IMR-90 (cell line): ENCODE measurements at regions of chr4 and their contacts with region 1.

Region 1: GRCh38 chr4:33649015-33649414 is 2595.3 kb downstream of the ARAP2 start:
- DNase-seq: peak; percentile 5
- ATAC-seq: no peak
- H3K4me3 ChIP-seq: no peak overlapping the region
- H3K27ac ChIP-seq: no peak overlapping the region
- H3K4me1 ChIP-seq: no peaks in the 10 kb centered on the region
- H3K27me3 ChIP-seq: no peaks in the 10 kb centered on the region
- CTCF ChIP-seq: peak; percentile 37
- POLR2A ChIP-seq: no peak
- RAD21 ChIP-seq: peak; percentile 52

Region 2: DNA sequence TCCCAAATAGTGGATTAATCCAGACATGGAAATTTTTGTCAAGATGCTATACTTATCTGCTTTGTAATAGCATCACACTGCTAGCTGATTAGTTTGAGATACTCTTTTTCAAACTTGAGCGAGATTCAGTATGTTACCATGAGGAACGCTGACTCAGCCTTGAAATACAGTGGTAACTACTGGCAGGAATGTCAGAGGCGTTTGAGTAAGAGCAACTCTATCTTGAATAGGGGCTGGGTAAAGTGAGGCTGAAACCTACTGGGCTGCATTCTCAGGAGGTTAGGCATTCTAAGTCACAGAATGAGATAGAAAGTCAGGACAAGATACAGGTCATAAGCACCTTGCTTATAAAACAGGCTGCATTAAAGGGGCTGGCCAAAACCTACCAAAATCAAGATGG is 75.7 kb after region 1 on chr4:
- CTCF ChIA-PET with region 1: no interaction called
- POLR2A ChIA-PET with region 1: no interaction called
- dilution Hi-C with region 1: no loop called
- in situ Hi-C with region 1: no loop called
- intact Hi-C with region 1: no loop called
- DNase-seq: no peak
- ATAC-seq: no peak
- H3K4me3 ChIP-seq: no peak overlapping the region
- H3K27ac ChIP-seq: no peak overlapping the region
- H3K4me1 ChIP-seq: no peaks in the 10 kb centered on the region
- H3K27me3 ChIP-seq: no peaks in the 10 kb centered on the region
- CTCF ChIP-seq: no peak
- POLR2A ChIP-seq: no peak
- RAD21 ChIP-seq: no peak

Region 3: GRCh38 chr4:34720571-34720970 is 1071.6 kb after region 1 on chr4:
- CTCF ChIA-PET with region 1: no interaction called
- POLR2A ChIA-PET with region 1: no interaction called
- dilution Hi-C with region 1: no loop called
- in situ Hi-C with region 1: no loop called
- intact Hi-C with region 1: loop called (anchors 5 kb)
- DNase-seq: peak; percentile 24
- ATAC-seq: no peak
- H3K4me3 ChIP-seq: no peak overlapping the region
- H3K27ac ChIP-seq: no peak overlapping the region
- H3K4me1 ChIP-seq: no peaks in the 10 kb centered on the region
- H3K27me3 ChIP-seq: no peaks in the 10 kb centered on the region
- CTCF ChIP-seq: peak; percentile 50
- POLR2A ChIP-seq: no peak
- RAD21 ChIP-seq: peak; percentile 46